Breast epithelium (tissue), 4 donors: ENCODE measurements at regions of chr1 and their contacts with region 1.

Region 1: DNA sequence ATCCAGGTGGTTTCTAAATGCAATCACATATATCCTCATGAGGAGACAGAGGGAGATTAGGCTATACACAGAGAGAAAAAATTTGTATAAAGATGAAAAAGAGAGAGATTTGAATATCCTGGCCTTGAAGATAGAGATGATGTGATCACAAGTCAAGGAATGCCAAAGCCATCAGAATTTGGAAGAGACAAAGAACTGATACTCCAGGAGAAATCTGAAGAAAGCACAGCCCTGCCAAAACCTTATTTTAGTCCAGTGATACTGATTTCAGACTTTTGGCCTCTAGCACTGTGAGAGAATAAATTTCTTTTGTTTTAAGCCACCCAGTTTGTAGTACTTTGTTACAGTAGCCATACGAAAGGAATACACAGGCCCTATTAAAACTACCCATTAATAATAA is 33.4 kb downstream of the DOCK7 start:
- DNase-seq: no peak
- H3K4me3 ChIP-seq: no peak overlapping the region
- H3K27ac ChIP-seq: no peak overlapping the region
- H3K4me1 ChIP-seq: no peaks in the 10 kb centered on the region
- H3K27me3 ChIP-seq: no peaks in the 10 kb centered on the region
- CTCF ChIP-seq: no peak
- POLR2A ChIP-seq: no peak

Region 2: GRCh38 chr1:63261736-63262458 is 607.2 kb after region 1 on chr1:
- intact Hi-C with region 1: loop called (anchors 10 kb)
- DNase-seq: no peak
- H3K4me3 ChIP-seq: no peak overlapping the region
- H3K27ac ChIP-seq: no peak overlapping the region
- H3K4me1 ChIP-seq: no peaks in the 10 kb centered on the region
- H3K27me3 ChIP-seq: no peaks in the 10 kb centered on the region
- CTCF ChIP-seq: no peak
- POLR2A ChIP-seq: no peak